ENCODE measurements at regions of chr11 and their contacts with region 1.

Region 1: GRCh38 chr11:82775736-82776346 is 42.2 kb upstream of the FAM181B start:
- DNase-seq: peak; percentile 55 to 77
- H3K4me3 ChIP-seq: no peak overlapping the region
- H3K4me3 Mint-ChIP-seq: no peak overlapping the region
- H3K27ac Mint-ChIP-seq: no peak overlapping the region
- H3K4me1 ChIP-seq: no peaks in the 10 kb centered on the region
- H3K4me1 Mint-ChIP-seq: no peaks in the 10 kb centered on the region
- H3K27me3 ChIP-seq: no peaks in the 10 kb centered on the region
- H3K27me3 Mint-ChIP-seq: peaks cover 16% of the 10 kb centered on the region
- CTCF ChIP-seq: peak; percentile 83 to 94

Region 2: GRCh38 chr11:82818409-82819043 is 42.7 kb after region 1 on chr11:
- CTCF ChIA-PET with region 1: interaction called, 12 read pairs
- POLR2A ChIA-PET with region 1: no interaction called
- intact Hi-C with region 1: loop called (anchors 1 kb)
- DNase-seq: peak; percentile 56 to 64
- H3K4me3 ChIP-seq: no peak overlapping the region
- H3K4me3 Mint-ChIP-seq: no peak overlapping the region
- H3K27ac Mint-ChIP-seq: peak overlapping the region; percentile 64
- H3K4me1 ChIP-seq: peaks cover 15% of the 10 kb centered on the region
- H3K4me1 Mint-ChIP-seq: peaks cover 11% of the 10 kb centered on the region
- H3K27me3 ChIP-seq: no peaks in the 10 kb centered on the region
- H3K27me3 Mint-ChIP-seq: no peaks in the 10 kb centered on the region
- CTCF ChIP-seq: peak; percentile 29 to 43

Measured in Caco-2 (cell line).